Ascending aorta (tissue), 2 donors: ENCODE measurements at regions of chr14 and their contacts with region 1.

Region 1: GRCh38 chr14:22929104-22929847 is at the start of gene PRMT5:
- DNase-seq: peak; percentile 99 to 100
- H3K4me3 ChIP-seq: peak within 1 kb of the TSS; percentile 85 to 87
- H3K27ac ChIP-seq: peak within 1 kb of the TSS; percentile 87 to 91
- H3K4me1 ChIP-seq: peaks cover 0 to 14% of the 10 kb centered on the region in 2 donors
- H3K27me3 ChIP-seq: no peaks in the 10 kb centered on the region
- CTCF ChIP-seq: no peak
- total RNA-seq, gene PRMT5: 118 TPM

Region 2: GRCh38 chr14:22918804-22919600 is 10.3 kb before region 1 on chr14 and contains the start of gene RBM23:
- intact Hi-C with region 1: loop called (anchors 1 kb)
- DNase-seq: peak; percentile 99 to 100
- H3K4me3 ChIP-seq: peak within 1 kb of the TSS; percentile 57 to 65
- H3K27ac ChIP-seq: peak within 1 kb of the TSS; percentile 86 to 93
- H3K4me1 ChIP-seq: peaks cover 6 to 18% of the 10 kb centered on the region in 2 donors
- H3K27me3 ChIP-seq: no peaks in the 10 kb centered on the region
- CTCF ChIP-seq: no peak
- total RNA-seq, gene RBM23: 113 TPM

Region 3: DNA sequence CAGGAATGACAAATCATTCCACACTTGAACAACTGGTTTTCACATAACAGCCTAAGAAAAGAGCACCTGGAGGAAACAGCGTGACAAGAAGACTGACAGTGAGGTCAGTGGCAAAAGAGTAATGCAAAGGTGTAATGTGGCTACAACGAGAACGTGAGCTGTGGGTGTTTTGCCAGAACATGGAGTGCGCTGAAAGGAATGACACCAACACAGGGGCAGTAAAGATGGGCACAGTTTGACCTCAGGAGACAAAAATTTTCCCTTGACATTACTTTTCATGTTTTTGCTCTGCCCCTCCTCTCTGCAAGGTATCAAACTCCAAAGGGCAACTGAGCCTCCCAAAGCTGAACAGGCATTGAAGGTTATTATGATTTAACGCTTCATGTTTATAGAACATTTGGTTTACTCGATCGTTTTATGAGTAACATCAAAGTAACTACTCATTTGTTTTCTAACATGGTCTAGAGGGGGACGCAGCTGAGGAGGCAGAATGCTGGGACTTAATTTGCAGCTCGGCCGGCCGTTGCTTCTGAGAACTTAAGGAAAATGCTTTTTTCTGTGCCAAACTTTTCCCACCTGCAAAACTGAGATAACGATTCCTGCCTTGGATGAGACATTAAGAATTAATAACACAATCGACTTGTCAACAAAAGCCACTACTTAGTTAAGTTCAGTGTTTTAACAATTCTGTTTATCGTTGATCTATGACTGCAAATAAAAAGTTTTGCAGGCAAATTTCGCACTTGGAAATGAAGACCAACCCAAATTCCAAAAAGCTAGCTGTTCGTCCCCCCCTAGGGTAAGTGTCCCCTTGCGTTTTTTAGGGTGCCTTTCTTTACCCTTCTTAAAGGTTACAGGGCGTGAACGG is 26.7 kb after region 1 on chr14:
- intact Hi-C with region 1: loop called (anchors 1 kb)
- DNase-seq: no peak
- H3K4me3 ChIP-seq: peak overlapping the region; percentile 78 to 84
- H3K27ac ChIP-seq: peak overlapping the region; percentile 94 to 95
- H3K4me1 ChIP-seq: peaks cover 5 to 9% of the 10 kb centered on the region in 2 donors
- H3K27me3 ChIP-seq: no peaks in the 10 kb centered on the region
- CTCF ChIP-seq: no peak

Region 4: DNA sequence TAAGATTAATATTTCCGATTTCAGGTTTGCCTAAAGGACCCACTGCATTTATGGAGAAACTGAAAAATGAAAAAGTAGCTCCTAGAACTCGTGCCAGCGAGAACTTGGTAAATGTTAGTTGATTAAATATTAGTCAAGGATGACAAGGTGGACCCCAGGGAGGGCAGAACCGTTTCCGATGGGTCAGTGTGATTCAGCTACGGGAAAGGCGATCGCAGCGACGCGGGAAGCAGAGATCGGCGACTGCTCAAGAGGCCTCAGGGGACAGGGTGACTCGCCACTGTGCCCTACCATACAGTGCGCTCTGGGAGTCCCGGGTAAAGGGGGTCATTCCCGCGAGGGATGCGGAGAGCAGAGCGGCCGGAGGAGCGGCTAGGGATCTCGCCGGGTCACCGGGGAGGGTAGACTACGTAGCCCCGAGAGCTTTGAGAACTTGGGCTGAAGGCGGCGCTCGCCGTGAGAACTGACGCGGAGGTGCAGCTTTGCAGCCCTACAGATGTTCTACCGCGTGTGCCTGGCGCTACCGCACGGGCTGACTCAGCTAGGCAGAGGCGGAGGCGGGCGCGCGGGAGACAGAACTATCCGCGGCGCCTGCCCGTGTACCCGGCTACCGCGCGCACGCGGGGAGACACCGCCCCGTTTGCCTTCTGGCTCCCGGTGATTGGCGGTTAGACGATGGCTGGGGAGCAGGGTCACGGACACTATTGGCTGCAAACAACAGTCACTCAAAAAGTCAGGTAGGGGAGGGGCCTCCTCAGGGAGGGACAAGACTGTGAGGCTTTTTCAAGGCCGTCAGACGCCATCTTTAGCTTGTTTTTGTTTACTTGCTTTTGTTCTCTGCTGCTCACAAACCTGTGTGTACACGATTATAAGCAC is 77.5 kb after region 1 on chr14:
- intact Hi-C with region 1: loop called (anchors 2 kb)
- DNase-seq: peak; percentile 87 to 98
- H3K4me3 ChIP-seq: peak overlapping the region; percentile 82 to 83
- H3K27ac ChIP-seq: peak overlapping the region; percentile 85 to 88
- H3K4me1 ChIP-seq: peaks cover 3 to 9% of the 10 kb centered on the region in 2 donors
- H3K27me3 ChIP-seq: no peaks in the 10 kb centered on the region
- CTCF ChIP-seq: peak in 1 of 3 experiments; percentile 24

Region 5: GRCh38 chr14:23057757-23058653 is 128.7 kb after region 1 on chr14:
- intact Hi-C with region 1: loop called (anchors 5 kb)
- DNase-seq: peak; percentile 28 to 86
- H3K4me3 ChIP-seq: peak overlapping the region; percentile 60 to 95
- H3K27ac ChIP-seq: peak overlapping the region in 1 of 2 donors; percentile 73
- H3K4me1 ChIP-seq: peaks cover 3 to 23% of the 10 kb centered on the region in 2 donors
- H3K27me3 ChIP-seq: no peaks in the 10 kb centered on the region
- CTCF ChIP-seq: peak; percentile 87 to 96 (median 92)

Region 6: DNA sequence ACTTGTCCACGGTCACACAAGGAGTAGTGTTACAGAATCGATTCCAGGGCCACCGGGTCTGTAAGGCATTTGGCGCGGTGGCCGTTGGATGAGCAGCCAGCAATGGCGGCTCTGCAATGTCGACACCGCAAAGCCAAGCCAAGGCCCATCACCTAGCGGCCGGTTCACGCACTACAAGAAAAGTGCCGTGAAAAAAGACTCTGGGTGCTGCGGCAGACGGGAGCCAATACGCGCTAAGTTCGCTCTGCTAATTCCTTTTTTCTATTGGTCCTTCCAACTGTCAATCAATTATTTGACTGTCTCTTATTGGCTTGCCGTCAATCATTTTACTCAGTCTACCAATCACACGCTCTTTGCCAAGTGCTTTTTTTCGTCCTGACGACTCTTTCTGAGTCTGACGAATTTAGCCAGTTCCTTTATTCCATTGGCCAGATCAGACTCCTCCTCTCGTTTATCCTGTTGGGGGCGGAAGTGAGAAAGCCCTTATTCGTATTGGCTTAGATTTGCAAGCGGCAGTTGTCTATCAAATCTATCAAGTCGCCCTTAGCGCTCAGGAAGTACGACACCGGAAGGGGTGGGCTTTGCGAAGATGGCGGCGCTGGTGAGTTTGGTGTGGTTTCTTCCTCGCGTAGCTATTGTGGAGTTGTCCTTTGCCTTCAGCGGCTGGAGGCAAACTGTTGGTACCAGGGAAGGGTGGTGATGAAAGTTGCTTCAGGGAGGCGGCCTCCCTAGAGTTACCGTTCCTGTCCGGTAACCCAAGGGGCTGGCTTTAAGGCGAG is 540.0 kb after region 1 on chr14 and contains the start of gene NGDN:
- intact Hi-C with region 1: loop called (anchors 5 kb)
- DNase-seq: peak; percentile 89 to 99
- H3K4me3 ChIP-seq: peak within 1 kb of the TSS; percentile 87 to 94
- H3K27ac ChIP-seq: peak within 1 kb of the TSS; percentile 83 to 85
- H3K4me1 ChIP-seq: peaks cover 0 to 7% of the 10 kb centered on the region in 2 donors
- H3K27me3 ChIP-seq: no peaks in the 10 kb centered on the region
- CTCF ChIP-seq: peak; percentile 79 to 85 (median 82)
- total RNA-seq, gene NGDN: 7.8 TPM